ENCODE measurements at regions of chr4 and their contacts with region 1.

Region 1: GRCh38 chr4:112231779-112232713 is at the start of gene AP1AR:
- DNase-seq: peak; percentile 90
- CTCF ChIP-seq: peak; percentile 43

Region 2: DNA sequence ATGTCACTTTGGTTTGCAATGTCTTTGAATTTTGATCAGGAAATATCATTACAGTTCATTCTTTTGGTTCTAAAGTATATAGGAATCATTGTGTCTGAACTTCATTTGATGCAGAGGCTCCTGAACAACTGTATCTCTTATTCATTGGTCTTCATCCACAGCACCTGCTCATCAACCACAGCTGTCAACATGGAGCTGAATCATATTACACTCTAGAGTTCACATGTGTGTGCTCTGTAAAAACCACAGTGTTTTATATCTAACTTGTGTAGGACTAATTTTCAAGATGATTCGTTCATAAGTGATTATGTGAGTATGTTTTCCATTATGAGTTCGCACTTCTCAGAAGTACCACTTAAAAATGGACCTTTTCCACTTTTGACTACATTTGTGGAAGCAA is 730.1 kb before region 1 on chr4:
- CTCF ChIA-PET with region 1: no interaction called
- POLR2A ChIA-PET with region 1: no interaction called
- DNase-seq: no peak
- CTCF ChIP-seq: no peak

Region 3: DNA sequence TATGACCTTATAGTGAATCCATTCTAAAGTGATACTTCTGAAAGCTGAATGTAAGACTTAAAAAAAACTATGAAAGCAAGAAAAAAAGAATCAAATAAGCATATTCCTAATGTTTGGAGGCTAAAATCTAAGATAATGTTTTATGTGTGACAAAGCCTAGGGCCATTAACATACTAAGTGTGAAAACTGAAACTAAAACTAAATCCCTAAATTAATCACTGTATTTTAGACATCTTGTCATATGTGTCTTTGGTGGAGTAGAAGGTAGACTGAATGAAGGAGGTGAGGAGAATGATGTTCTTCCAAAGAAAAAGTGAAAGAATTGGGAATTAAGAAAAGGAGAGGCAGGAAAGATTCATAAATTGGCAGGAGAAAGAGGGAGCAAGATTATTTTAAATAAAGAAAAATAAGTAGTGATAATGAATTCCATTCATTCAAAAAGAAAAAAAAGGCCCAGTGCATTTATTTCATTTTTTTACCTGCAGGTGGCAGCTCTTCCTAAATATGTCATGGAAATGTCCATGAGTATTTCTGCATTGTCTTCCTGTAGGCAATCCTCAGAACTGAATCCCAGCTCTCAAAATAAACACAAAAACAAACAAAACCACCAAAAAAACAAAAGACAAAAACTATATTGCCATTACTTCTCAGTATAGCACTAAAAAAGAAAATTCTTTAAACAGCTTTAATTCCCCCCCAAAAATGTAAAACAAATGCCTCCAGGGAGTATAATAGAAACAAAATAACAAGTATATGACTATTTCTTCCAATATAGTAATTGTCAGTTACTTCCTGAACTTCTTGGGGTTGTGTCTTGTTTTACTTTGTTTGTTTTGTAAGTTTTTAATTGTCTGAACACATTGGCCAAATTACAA is 17.4 kb before region 1 on chr4:
- CTCF ChIA-PET with region 1: interaction called, 10 read pairs
- POLR2A ChIA-PET with region 1: no interaction called
- DNase-seq: no peak
- CTCF ChIP-seq: peak; percentile 33

Region 4: DNA sequence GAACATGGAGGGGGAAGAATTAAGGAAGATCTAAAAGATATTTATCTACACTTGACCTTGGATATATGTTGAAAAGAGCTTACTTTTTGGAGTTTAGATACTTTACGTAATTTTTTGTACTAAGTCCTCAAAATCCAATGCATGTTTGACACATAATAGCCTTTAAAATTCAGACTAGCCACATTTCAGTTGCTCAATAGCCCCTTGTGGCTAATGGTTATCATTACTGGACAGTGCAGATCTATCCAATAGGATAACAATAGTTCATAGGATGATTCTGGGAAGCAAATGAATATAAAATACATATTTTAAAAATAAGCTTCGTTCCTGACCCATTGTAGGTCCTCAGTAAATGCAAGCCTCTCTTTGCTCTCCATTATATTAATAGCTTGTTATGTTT is 13.3 kb after region 1 on chr4:
- CTCF ChIA-PET with region 1: interaction called, 60 read pairs
- POLR2A ChIA-PET with region 1: no interaction called
- DNase-seq: no peak
- CTCF ChIP-seq: no peak

Region 5: GRCh38 chr4:112251019-112251643 is 19.1 kb after region 1 on chr4:
- CTCF ChIA-PET with region 1: interaction called, 60 read pairs
- POLR2A ChIA-PET with region 1: no interaction called
- DNase-seq: no peak
- CTCF ChIP-seq: no peak